ENCODE measurements at regions of chr11 and their contacts with region 1.

Region 1: DNA sequence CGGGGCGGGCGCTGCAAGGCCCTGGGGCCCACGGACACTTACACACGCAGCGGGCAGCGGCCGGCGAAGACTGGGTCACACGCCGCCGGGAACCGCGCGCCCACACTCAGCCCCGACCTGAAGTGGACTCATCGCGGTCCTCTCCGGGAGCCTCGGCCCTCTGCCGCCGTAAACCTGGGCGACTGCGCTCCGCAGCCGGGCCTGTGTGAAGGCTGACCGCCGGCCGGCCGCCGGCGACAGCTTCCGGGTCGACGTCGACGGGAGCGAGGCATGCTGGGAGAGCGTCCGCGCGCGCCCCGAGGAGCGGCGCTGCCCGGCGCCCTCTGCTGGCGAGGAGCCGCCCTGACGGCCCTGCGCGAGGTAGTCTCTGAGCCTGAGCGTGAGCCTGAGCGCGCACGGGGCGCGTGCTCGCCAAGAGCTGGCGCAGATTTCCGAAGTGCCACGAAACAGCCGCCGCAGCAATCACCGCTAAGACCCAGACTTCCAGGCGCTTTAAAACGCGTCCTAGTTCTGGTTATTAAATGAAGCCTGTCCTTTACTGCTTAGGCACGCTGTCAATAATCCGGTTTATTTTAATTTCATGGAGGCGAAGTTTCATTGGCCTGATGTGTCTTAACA is at the start of gene SNX19:
- DNase-seq: peak; percentile 89
- H3K4me3 Mint-ChIP-seq: peak within 1 kb of the TSS; percentile 81
- H3K27ac Mint-ChIP-seq: peak within 1 kb of the TSS; percentile 63
- H3K4me1 Mint-ChIP-seq: peaks cover 32% of the 10 kb centered on the region
- H3K27me3 Mint-ChIP-seq: peaks cover 9% of the 10 kb centered on the region
- total RNA-seq, gene SNX19: 42.1 and 48.7 TPM in 2 replicates

Region 2: GRCh38 chr11:129895126-129896041 is 1021.0 kb before region 1 on chr11 and contains the start of gene NFRKB:
- intact Hi-C with region 1: loop called (anchors 1 kb)
- DNase-seq: peak; percentile 81
- H3K4me3 Mint-ChIP-seq: peak within 1 kb of the TSS; percentile 90
- H3K27ac Mint-ChIP-seq: peak within 1 kb of the TSS; percentile 82
- H3K4me1 Mint-ChIP-seq: peaks cover 26% of the 10 kb centered on the region
- H3K27me3 Mint-ChIP-seq: no peaks in the 10 kb centered on the region
- total RNA-seq, gene NFRKB: 42.6 and 42.8 TPM in 2 replicates